Activated CD4-positive, alpha-beta T cell treated with anti-CD3 and anti-CD28 coated beads, Interleukin-2, amount 10 ng/mL, durations not matched to agents 7 days and 5 days (primary cell): ENCODE measurements at regions of chr6 and their contacts with region 1.

Region 1: DNA sequence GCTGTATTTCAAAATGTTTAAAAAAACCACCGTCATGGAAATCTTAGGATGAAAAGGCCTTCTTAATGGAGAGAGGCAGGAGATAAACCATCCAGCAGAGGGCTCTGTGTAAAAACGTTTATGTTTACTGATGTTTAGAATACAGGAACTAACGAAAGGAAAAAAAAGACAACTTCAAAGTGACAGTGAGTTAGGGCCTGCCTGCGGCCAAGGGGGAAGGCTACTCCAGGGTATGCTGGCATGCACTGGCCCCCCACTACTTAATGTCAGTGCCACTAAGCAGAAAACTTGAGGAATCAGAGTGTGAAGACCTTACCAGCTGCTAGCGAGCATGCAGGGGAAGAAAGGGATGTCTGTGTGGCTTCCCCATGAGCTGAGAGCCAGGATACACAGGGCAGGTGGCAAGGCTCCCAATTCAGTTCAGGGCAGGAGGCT is 47.7 kb downstream of the AKAP7 start:
- DNase-seq: peak; percentile 58
- H3K4me3 Mint-ChIP-seq: peak overlapping the region; percentile 5
- H3K27ac Mint-ChIP-seq: peak overlapping the region; percentile 97
- H3K4me1 Mint-ChIP-seq: peaks cover 13% of the 10 kb centered on the region
- H3K27me3 Mint-ChIP-seq: no peaks in the 10 kb centered on the region

Region 2: DNA sequence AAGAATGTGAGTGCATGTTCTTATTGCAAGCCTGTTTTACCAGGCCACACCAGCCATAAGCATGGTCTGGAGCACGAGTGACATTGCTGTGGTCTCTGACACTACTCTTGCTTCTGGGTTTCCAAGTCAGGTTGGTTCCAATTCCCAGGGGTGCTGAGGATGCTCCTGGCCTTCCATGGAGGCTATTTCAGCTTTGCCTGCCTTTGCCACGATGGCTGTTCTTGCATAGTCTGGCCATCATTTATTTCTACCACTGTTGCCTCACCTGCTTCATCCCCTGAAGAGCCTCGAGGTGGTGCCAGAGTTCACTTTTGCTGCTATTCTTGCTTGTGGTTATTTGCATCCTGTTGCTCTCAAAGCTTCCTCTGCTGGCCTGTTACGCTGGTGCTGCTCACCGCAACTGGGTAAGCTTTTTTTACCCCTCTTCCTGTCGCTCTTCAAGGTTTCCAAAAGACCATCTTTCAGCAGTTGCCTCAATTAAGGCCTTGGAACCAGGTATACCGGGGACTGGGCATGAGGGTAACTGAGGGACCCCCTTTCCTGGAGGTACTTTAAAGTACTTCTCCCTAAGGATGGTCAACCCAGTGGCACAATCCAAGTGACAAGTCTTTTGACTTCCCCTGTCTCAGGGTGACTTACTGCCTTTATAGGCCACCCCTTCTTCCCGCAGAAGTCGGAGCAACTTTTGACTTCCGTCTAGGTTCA is 16.7 kb after region 1 on chr6:
- CTCF ChIA-PET with region 1: interaction called, 10 read pairs
- POLR2A ChIA-PET with region 1: no interaction called
- DNase-seq: peak; percentile 85
- H3K4me3 Mint-ChIP-seq: peak overlapping the region; percentile 79
- H3K27ac Mint-ChIP-seq: peak overlapping the region; percentile 99
- H3K4me1 Mint-ChIP-seq: peaks cover 62% of the 10 kb centered on the region
- H3K27me3 Mint-ChIP-seq: no peaks in the 10 kb centered on the region

Region 3: DNA sequence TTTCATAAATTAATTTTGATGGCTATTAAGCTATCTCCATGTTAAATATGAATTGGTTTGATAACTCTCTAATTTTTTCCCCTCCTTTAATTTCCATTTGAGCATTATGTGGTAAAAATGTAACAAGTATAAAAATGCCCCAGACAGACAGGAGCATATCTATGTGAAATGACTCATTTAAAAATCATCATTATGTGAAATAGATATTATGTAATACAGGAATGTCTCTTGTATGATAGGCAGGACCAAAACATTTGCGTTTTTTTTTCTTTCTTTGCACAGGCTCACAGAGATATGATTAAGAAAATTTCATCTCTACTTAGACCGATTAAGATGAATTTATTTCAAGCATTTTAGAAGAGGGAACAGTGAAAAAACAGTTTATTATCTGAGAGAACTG is 48.1 kb after region 1 on chr6:
- CTCF ChIA-PET with region 1: no interaction called
- POLR2A ChIA-PET with region 1: no interaction called
- DNase-seq: no peak
- H3K4me3 Mint-ChIP-seq: no peak overlapping the region
- H3K27ac Mint-ChIP-seq: no peak overlapping the region
- H3K4me1 Mint-ChIP-seq: no peaks in the 10 kb centered on the region
- H3K27me3 Mint-ChIP-seq: no peaks in the 10 kb centered on the region